ENCODE measurements at regions of chr4 and their contacts with region 1.

Region 1: DNA sequence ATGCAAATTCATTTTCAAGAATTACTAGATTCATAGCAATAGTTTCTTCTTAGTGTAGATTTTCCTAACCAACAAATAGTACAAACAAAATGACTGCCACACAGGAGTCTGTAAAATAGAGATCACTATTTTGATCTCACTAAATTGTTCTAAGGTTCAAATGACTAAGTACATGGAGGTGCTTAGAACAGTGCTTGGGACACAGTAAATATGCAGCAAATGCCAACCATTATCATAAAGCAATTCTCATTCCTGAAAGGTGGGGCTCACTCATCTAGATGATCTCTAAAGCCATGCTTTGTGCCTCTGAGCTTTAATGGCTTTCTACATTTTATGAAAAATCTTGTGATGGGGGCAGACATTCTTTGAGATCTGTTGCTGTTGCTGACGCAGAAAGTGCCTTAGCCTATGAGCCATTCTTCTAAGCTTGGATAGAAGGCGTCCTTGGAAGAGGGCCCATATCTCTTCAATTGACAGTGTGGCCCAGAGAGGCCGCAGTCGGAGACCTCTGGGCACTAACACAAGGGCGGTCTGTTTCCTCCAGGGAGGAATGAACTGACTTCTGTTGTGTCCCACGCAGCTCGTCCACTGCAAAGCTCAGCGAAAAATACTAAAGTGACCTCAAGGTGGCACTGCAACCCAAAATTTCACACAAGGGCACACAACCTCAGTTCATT is 23.5 kb downstream of the TLR10 start:
- DNase-seq: peak; percentile 77
- ATAC-seq: peak; percentile 51
- H3K4me3 ChIP-seq: no peak overlapping the region
- H3K27ac ChIP-seq: peak overlapping the region; percentile 95; the same call in 1 of the 2 replicates
- H3K4me1 ChIP-seq: peaks cover 42% of the 10 kb centered on the region
- H3K27me3 ChIP-seq: no peaks in the 10 kb centered on the region
- CTCF ChIP-seq: peak; percentile 46 to 75 (median 74)
- EP300 ChIP-seq: no peak
- POLR2A ChIP-seq: no peak
- RAD21 ChIP-seq: peak; percentile 93

Region 2: DNA sequence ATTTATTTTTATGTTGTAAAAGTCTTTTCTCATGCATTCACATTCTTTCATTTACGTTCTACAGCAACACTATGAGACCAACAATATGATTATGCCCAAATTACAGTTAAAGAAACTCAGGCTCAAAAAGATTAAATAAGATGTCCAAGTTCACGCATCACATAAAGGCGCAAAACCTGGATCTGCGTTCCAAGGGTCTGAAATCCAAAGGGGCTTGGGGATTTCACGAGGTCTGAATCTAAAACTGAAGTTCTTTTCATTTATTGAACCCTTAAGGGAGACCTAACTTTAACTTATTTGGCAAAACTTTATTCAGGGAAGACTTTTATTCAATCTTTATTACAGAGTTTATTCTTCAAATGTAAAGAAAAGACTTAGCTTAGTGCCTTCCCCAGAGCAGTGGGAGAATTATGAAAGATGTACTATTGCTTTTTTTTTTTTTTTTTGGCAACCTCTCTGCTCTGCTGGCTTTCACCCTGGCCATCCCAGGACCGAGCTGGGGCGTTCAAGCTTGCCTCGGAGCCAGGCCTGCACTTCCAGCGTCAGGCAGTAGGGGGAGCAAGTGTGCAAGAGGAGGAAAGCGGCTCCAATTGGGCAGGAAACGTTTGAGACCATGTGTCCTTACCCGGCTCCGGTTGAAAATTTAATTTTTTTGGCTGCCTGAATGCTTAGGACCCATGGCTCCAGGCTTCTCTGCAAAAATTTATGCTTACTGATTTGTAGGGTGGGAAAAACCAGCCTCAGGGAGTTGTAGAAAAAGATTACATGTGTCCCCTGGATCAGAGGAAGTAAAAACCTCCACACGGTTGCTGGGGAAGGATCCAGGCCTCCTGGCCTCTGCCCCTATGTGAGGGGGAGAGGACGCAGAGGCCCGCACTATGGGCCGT is 439.6 kb before region 1 on chr4:
- CTCF ChIA-PET with region 1: no interaction called
- POLR2A ChIA-PET with region 1: no interaction called
- RAD21 ChIA-PET with region 1: interaction called, 12 read pairs
- SMC1A ChIA-PET with region 1: interaction called, 4 read pairs
- in situ Hi-C with region 1: no loop called
- intact Hi-C with region 1: no loop called
- DNase-seq: peak; percentile 74
- ATAC-seq: peak; percentile 80
- H3K4me3 ChIP-seq: peak overlapping the region; percentile 47
- H3K27ac ChIP-seq: peak overlapping the region; percentile 91
- H3K4me1 ChIP-seq: peaks cover 27% of the 10 kb centered on the region
- H3K27me3 ChIP-seq: no peaks in the 10 kb centered on the region
- CTCF ChIP-seq: peak; percentile 93 to 99 (median 99)
- EP300 ChIP-seq: no peak
- POLR2A ChIP-seq: no peak
- RAD21 ChIP-seq: peak; percentile 99

Region 3: GRCh38 chr4:38774181-38774955 is 15.1 kb after region 1 on chr4:
- CTCF ChIA-PET with region 1: interaction called, 18 read pairs
- POLR2A ChIA-PET with region 1: interaction called, 196 read pairs
- RAD21 ChIA-PET with region 1: interaction called, 437 read pairs
- SMC1A ChIA-PET with region 1: interaction called, 468 read pairs
- in situ Hi-C with region 1: no loop called
- intact Hi-C with region 1: no loop called
- DNase-seq: no peak
- ATAC-seq: no peak
- H3K4me3 ChIP-seq: no peak overlapping the region
- H3K27ac ChIP-seq: no peak overlapping the region
- H3K4me1 ChIP-seq: peaks cover 7% of the 10 kb centered on the region; the same call in 1 of the 2 replicates
- H3K27me3 ChIP-seq: no peaks in the 10 kb centered on the region
- CTCF ChIP-seq: no peak
- EP300 ChIP-seq: no peak
- POLR2A ChIP-seq: no peak
- RAD21 ChIP-seq: no peak

Region 4: DNA sequence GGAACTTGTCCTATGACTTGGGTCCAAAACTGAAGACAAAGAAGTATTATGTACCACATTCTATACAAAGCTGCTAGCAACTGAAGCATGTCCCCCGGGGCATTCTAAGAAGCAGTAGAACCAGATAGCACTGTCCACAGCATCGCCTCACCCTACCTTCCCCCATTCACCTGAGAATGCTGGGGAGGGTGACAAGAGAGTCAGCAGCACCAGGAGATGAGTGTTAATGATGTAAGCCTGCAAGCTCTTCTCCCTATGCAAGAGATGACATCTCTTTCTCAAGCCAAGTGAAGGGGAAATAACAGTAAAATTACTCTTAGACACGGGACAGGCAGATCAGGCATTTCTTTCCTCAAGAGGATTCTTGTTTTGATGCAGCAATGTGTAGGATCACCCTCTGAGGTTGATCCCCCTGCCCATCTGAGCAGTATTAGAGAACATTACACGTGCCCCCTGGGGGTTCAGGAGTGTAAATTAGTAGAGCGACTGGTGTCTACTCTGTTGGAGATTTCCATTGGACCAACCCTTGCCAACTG is 59.3 kb after region 1 on chr4:
- CTCF ChIA-PET with region 1: interaction called, 47 read pairs
- POLR2A ChIA-PET with region 1: interaction called, 35 read pairs
- RAD21 ChIA-PET with region 1: interaction called, 79 read pairs
- SMC1A ChIA-PET with region 1: interaction called, 72 read pairs
- in situ Hi-C with region 1: no loop called
- intact Hi-C with region 1: loop called (anchors 1 kb)
- DNase-seq: peak; percentile 81
- ATAC-seq: peak; percentile 76
- H3K4me3 ChIP-seq: no peak overlapping the region
- H3K27ac ChIP-seq: peak overlapping the region; percentile 96
- H3K4me1 ChIP-seq: peaks cover 40% of the 10 kb centered on the region
- H3K27me3 ChIP-seq: no peaks in the 10 kb centered on the region
- CTCF ChIP-seq: no peak
- EP300 ChIP-seq: peak; percentile 94 to 96; a peak in 3 of 4 replicates
- POLR2A ChIP-seq: no peak; the same call in 1 of the 2 replicates
- RAD21 ChIP-seq: no peak

Region 5: DNA sequence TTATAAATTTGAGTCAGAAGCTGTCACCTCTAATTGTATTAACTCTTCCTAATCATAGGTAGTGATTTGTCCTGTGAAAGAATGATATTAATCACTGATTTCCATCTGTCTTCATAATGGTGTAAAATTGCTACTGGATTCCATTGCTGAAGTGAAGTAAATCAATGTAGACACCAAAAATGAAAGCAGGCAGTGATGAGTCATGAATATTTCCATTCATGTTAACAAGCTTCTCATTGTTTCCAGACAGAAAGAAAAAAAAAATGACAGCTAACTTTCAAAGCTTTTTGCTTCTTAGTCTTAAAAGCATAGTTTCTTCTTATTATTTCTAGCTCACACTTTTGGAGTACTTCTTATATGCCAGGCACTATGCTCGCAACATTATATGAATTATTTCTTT is 129.9 kb after region 1 on chr4:
- CTCF ChIA-PET with region 1: interaction called, 84 read pairs
- POLR2A ChIA-PET with region 1: interaction called, 7 read pairs
- RAD21 ChIA-PET with region 1: interaction called, 49 read pairs
- SMC1A ChIA-PET with region 1: interaction called, 62 read pairs
- in situ Hi-C with region 1: no loop called
- intact Hi-C with region 1: loop called (anchors 2 kb)
- DNase-seq: peak; percentile 58
- ATAC-seq: peak; percentile 85
- H3K4me3 ChIP-seq: no peak overlapping the region
- H3K27ac ChIP-seq: peak overlapping the region; percentile 64; the same call in 1 of the 2 replicates
- H3K4me1 ChIP-seq: peaks cover 4% of the 10 kb centered on the region
- H3K27me3 ChIP-seq: no peaks in the 10 kb centered on the region
- CTCF ChIP-seq: no peak
- EP300 ChIP-seq: peak; percentile 68 to 86; a peak in 3 of 4 replicates
- POLR2A ChIP-seq: no peak
- RAD21 ChIP-seq: no peak

Region 6: DNA sequence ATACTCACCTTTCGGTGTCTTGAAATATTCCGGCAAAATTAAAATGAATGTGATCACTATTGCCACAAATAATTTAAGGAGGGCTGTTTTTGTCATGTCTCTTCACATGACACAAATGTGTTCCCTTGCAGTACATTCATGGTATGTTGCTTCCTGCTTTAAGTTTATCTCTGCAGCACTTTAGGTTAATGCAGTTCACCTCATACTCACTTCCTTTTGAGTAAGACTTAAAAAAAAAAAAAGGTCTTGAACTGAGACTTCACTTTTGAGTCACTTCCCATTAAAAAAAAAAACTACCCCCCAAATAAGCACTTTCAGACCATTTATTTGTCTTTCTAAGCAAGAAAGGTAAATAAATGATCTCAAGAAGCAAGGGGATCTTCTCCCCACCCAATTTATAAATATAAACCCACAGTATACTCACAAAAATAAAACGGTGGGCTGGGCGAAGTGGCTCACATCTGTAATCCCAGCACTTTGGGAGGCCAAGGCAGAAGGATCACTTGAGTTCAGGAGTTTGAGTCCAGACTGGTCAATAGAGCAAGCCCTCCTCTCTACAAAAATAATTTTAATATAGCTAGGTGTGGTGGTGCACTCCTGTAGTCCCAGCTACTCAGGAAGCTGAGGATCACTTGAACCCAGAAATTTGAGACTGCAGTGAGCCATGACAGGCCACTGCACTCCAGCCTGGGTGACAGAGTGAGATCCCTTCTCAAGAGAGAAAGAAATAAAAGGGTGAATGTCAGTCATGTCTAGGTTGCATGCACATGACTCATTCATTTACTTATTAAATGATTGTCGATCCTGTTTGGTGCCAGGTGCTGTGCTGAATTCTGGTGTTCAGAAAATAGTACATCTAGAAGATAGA is 273.2 kb after region 1 on chr4 and contains the start of gene TMEM156:
- CTCF ChIA-PET with region 1: interaction called, 11 read pairs
- POLR2A ChIA-PET with region 1: interaction called, 4 read pairs
- RAD21 ChIA-PET with region 1: interaction called, 5 read pairs
- SMC1A ChIA-PET with region 1: interaction called, 4 read pairs
- in situ Hi-C with region 1: loop called (anchors 25 kb)
- intact Hi-C with region 1: loop called (anchors 5 kb)
- DNase-seq: peak; percentile 82
- ATAC-seq: peak; percentile 70
- H3K4me3 ChIP-seq: peak within 1 kb of the TSS; percentile 79
- H3K27ac ChIP-seq: peak within 1 kb of the TSS; percentile 88
- H3K4me1 ChIP-seq: peaks cover 28% of the 10 kb centered on the region
- H3K27me3 ChIP-seq: no peaks in the 10 kb centered on the region
- CTCF ChIP-seq: no peak
- EP300 ChIP-seq: peak; percentile 56 to 90; a peak in 2 of 4 replicates
- POLR2A ChIP-seq: peak; percentile 39; the same call in 1 of the 2 replicates
- RAD21 ChIP-seq: no peak
- polyA plus RNA-seq, gene TMEM156: 35.0 to 36.2 TPM

Measured in GM12878 (cell line).